ENCODE measurements at regions of chr10 and their contacts with region 1.

Region 1: DNA sequence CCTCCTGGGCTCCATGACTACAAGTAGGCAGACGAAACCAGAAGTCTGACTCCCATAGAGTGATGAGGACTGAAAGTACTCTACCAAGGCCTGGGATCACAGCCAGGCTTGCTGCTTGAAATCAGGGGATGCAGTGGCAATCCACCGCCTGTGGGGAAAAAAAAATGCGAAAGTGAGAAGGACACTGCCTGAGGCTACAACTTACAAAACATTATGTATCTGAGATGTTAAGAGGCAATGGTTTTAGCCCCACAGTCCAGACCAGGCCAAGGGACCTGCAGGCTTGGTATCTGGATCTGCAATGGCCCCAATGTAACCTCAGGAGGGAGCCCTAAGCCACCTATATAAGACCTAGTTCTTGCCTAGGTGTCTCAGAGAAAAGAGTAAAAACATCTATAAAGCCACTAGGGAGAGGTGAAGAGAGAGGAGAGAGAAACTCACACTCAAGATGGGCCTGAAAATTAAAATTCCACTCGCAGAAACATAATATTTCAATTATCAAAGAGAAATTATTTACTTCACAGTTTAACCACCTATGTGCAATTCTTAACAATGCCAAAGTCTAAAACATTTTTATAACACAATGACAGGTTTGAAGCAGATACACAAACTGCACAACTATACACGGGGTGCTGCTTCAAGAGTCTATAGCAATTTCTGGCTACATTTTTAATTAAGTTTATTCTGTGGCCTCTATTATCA is 13.9 kb downstream of the DNAJC1 start:
- DNase-seq: peak; percentile 44
- H3K4me3 Mint-ChIP-seq: no peak overlapping the region
- H3K27ac Mint-ChIP-seq: no peak overlapping the region
- H3K4me1 Mint-ChIP-seq: peaks cover 11% of the 10 kb centered on the region
- H3K27me3 Mint-ChIP-seq: no peaks in the 10 kb centered on the region

Region 2: GRCh38 chr10:22420787-22421517 is 431.3 kb after region 1 on chr10:
- CTCF ChIA-PET with region 1: interaction called, 4 read pairs
- POLR2A ChIA-PET with region 1: no interaction called
- intact Hi-C with region 1: loop called (anchors 5 kb)
- DNase-seq: no peak
- H3K4me3 Mint-ChIP-seq: no peak overlapping the region
- H3K27ac Mint-ChIP-seq: no peak overlapping the region
- H3K4me1 Mint-ChIP-seq: no peaks in the 10 kb centered on the region
- H3K27me3 Mint-ChIP-seq: peaks cover 1% of the 10 kb centered on the region

Region 3: GRCh38 chr10:22550732-22551131 is 561.1 kb after region 1 on chr10:
- CTCF ChIA-PET with region 1: interaction called, 5 read pairs
- POLR2A ChIA-PET with region 1: no interaction called
- intact Hi-C with region 1: loop called (anchors 2 kb)
- DNase-seq: peak; percentile 74
- H3K4me3 Mint-ChIP-seq: no peak overlapping the region
- H3K27ac Mint-ChIP-seq: peak overlapping the region; percentile 5
- H3K4me1 Mint-ChIP-seq: peaks cover 17% of the 10 kb centered on the region
- H3K27me3 Mint-ChIP-seq: no peaks in the 10 kb centered on the region